Heart right ventricle (tissue), 16 donors: ENCODE measurements at regions of chr11 and their contacts with region 1.

Region 1: DNA sequence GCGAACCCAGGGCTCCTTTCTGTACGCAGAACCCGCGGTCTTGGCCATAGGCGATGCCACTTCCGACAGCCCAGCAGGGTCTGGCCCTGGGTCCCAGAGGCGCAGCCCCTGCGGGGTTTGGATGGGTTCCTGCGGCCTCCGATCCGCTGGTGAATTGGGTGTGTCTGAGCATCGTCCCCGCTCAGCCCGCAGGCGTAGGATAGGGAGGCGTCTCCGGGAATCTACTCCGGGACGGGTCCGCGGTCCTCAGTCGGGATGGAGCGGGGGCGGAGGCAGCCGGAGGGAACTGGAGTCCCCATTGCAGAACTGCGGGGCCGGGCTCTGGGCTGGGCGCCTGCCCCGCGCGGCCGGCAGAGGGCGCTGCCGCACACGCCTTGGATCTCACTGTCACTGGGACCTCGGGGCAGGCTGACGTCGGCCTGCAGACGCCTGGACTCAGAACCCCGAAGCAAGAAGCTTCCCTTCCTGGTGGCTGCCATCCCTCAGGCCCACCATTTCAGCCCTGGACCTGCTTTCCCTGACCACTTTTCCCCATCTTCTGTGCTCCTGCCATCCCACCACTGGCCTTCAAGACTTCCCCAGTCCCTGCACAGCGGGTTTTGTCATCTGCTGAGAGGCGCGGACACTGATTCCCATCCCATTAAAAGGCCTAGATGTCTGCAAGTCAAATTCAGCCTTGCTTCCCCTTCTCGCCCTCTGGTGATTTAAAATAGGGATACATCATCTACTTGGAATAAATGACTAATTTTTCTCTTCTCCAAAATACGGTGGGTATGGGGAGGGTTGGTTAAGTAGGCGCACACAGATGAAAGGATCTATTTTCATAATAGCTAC is 38.3 kb upstream of the CREB3L1 start:
- DNase-seq: peak; percentile 85 to 91
- ATAC-seq: peak; percentile 78 to 92 (median 90)
- H3K4me3 ChIP-seq: peak overlapping the region; percentile 39 to 69 (median 54)
- H3K27ac ChIP-seq: peak overlapping the region; percentile 82 to 99 (median 93)
- H3K4me1 ChIP-seq: peaks cover 10 to 53% (median 32%) of the 10 kb centered on the region in 9 donors
- H3K27me3 ChIP-seq: peaks cover 0 to 8% (median 0%) of the 10 kb centered on the region in 7 donors
- CTCF ChIP-seq: peak; percentile 99 to 100 (median 99)

Region 2: GRCh38 chr11:45683271-45684058 is 555.7 kb before region 1 on chr11:
- intact Hi-C with region 1: no loop called
- DNase-seq: no peak
- ATAC-seq: no peak
- H3K4me3 ChIP-seq: no peak overlapping the region
- H3K27ac ChIP-seq: no peak overlapping the region
- H3K4me1 ChIP-seq: peaks cover 0 to 10% (median 0%) of the 10 kb centered on the region in 9 donors
- H3K27me3 ChIP-seq: peaks cover 0 to 25% (median 0%) of the 10 kb centered on the region in 7 donors
- CTCF ChIP-seq: no peak

Region 3: DNA sequence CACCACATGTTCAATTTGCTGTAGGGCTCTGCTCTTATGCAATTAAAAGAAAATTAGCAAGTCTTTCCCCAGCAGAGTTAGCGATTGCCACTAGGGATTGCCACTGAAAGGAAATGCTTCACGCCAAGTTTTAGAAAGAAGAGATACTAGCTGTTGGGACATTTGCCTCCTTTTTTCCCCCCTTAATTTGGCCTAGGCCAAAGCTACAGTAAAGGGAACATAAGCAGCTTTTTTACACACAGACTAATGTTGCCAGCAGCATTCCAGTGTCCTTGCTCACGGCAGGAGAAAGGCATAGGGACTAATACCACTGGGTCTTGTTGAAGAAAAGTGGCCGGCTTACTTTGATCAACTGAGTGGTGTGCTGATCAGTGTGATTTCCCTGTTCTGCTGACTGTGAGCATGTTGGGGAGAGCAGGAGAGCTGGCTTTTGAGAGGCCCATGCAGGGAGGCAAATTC is 189.2 kb before region 1 on chr11:
- intact Hi-C with region 1: no loop called
- DNase-seq: no peak
- ATAC-seq: peak; percentile 38 to 89 (median 70)
- H3K4me3 ChIP-seq: no peak overlapping the region
- H3K27ac ChIP-seq: peak overlapping the region in 6 of 10 donors; percentile 15 to 66 (median 54)
- H3K4me1 ChIP-seq: peaks cover 5 to 51% (median 41%) of the 10 kb centered on the region in 9 donors
- H3K27me3 ChIP-seq: no peaks in the 10 kb centered on the region
- CTCF ChIP-seq: no peak

Region 4: DNA sequence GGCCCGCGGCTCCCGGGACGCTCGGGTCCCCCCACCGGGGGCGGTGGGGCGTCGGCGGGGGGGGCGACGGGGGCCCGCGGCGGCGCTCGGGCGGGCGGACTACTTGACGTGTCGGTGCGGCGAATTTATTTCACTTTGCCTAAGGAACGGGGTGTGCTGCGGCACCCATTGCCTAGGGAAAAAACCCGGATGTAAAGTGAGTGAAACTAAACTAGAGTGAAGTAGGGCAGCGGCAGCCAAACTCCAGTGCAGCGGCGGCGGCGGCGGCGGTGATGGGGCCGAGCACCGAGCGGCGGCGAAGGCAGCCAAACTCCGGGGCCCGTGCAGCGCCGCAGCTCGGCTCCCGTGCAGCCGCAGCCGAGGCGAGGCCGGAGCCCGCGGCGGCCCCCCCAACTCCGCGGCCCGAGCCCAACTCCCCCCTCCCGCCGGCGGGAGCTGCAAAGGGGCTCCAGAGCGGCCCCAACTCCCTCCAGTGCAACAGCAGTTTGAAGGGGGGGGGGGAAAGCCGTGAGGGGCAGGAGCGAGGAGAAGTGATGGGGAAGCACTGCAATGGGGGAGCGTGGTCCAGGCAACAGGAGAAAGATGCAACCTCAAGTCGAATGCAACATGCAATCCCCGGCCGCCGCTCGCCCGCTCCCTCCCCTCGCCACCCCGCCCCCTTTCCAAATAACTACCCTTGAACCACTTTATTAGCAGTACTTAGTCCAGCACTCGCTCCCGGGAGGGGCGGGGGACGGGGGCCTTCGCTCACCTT is 117.3 kb before region 1 on chr11:
- intact Hi-C with region 1: loop called in 5 of 10 experiments (anchors 5 kb)
- DNase-seq: peak; percentile 73 to 84
- ATAC-seq: peak; percentile 3 to 57 (median 30)
- H3K4me3 ChIP-seq: peak overlapping the region; percentile 51 to 84 (median 74)
- H3K27ac ChIP-seq: peak overlapping the region; percentile 72 to 97 (median 94)
- H3K4me1 ChIP-seq: peaks cover 0 to 37% (median 23%) of the 10 kb centered on the region in 9 donors
- H3K27me3 ChIP-seq: no peaks in the 10 kb centered on the region
- CTCF ChIP-seq: no peak

Region 5: GRCh38 chr11:46278387-46279125 is 39.4 kb after region 1 on chr11:
- intact Hi-C with region 1: loop called in 4 of 10 experiments (anchors 2 to 5 kb)
- DNase-seq: peak; percentile 49 to 62
- ATAC-seq: peak; percentile 21 to 58 (median 45)
- H3K4me3 ChIP-seq: peak overlapping the region; percentile 55 to 78 (median 70)
- H3K27ac ChIP-seq: peak overlapping the region; percentile 70 to 93 (median 80)
- H3K4me1 ChIP-seq: peaks cover 29 to 84% (median 58%) of the 10 kb centered on the region in 9 donors
- H3K27me3 ChIP-seq: peaks cover 0 to 36% (median 0%) of the 10 kb centered on the region in 7 donors
- CTCF ChIP-seq: peak; percentile 27 to 69 (median 57)

Region 6: DNA sequence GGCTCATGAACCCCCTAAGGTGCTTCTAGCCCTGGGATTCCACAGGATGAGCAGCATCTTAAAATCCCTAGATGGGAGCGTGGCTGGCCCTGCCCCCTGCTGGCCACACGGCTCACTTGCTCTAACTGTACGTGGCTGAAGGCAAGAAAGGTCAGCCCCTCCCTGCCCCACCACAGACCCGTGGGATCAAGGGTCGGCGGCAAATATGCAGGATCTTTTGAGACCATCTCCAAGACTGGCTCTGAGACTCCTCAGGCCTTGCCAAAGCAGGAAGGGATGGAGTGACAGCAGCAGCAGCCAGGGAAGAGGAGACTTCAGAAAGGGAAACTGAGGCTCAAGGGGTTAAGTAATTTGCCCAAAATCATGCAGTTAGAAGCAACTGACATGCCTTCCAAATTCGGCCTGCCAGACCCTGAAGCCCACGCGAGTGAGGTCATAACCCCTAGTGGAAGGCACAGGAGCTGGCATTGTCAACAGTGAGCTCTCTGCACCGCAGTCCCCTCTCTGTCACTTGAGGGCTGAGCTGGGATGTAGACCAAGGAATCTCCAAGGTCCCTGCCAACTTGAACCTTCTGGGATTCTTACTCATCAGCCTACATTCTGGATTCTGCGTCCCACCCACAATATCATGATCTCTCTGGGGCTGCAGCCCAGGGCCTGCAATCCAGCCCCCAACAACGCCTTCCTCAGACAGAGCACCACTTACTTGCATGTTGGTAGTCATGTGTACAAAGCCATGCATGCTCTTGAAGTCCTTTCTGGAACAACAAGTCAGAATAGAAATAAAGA is 69.6 kb after region 1 on chr11:
- intact Hi-C with region 1: loop called (anchors 1 to 5 kb)
- DNase-seq: peak; percentile 80 to 82
- ATAC-seq: peak; percentile 73 to 91 (median 85)
- H3K4me3 ChIP-seq: no peak overlapping the region
- H3K27ac ChIP-seq: no peak overlapping the region
- H3K4me1 ChIP-seq: peaks cover 0 to 9% (median 6%) of the 10 kb centered on the region in 9 donors
- H3K27me3 ChIP-seq: no peaks in the 10 kb centered on the region
- CTCF ChIP-seq: peak; percentile 78 to 95 (median 90)